Activated CD8-positive, alpha-beta T cell treated with anti-CD3 and anti-CD28 coated beads for 36 hours (primary cell): ENCODE measurements at regions of chr11 and their contacts with region 1.

Region 1: GRCh38 chr11:42840176-42840829 is 471.5 kb upstream of the API5 start:
- DNase-seq: no peak
- ATAC-seq: no peak
- H3K4me3 Mint-ChIP-seq: no peak overlapping the region
- H3K27ac Mint-ChIP-seq: no peak overlapping the region
- H3K4me1 Mint-ChIP-seq: no peaks in the 10 kb centered on the region
- H3K27me3 Mint-ChIP-seq: no peaks in the 10 kb centered on the region
- CTCF ChIP-seq: no peak

Region 2: DNA sequence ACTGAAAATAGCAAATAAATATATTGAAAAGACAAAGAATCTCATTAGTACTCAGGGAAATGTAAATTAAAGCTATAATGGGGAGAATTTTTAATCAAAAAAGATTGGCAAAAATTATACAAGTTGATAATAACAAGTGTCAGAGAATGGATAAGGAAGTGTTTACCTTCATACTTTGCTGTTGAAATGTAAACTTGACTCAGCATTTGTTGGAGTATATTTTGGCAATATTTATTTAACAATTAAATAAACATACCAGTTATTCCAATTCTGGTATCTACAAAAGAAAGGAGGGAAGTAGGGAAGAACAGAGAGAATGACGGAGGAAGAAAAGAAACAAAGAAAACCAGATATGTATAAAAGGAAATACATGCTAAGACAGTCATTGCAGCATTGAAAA is 45.3 kb before region 1 on chr11:
- CTCF ChIA-PET with region 1: no interaction called
- POLR2A ChIA-PET with region 1: no interaction called
- intact Hi-C with region 1: no loop called
- DNase-seq: no peak
- ATAC-seq: no peak
- H3K4me3 Mint-ChIP-seq: no peak overlapping the region
- H3K27ac Mint-ChIP-seq: no peak overlapping the region
- H3K4me1 Mint-ChIP-seq: no peaks in the 10 kb centered on the region
- H3K27me3 Mint-ChIP-seq: no peaks in the 10 kb centered on the region
- CTCF ChIP-seq: no peak

Region 3: GRCh38 chr11:42816471-42816870 is 23.8 kb before region 1 on chr11:
- CTCF ChIA-PET with region 1: no interaction called
- POLR2A ChIA-PET with region 1: no interaction called
- intact Hi-C with region 1: no loop called
- DNase-seq: no peak
- ATAC-seq: no peak
- H3K4me3 Mint-ChIP-seq: no peak overlapping the region
- H3K27ac Mint-ChIP-seq: no peak overlapping the region
- H3K4me1 Mint-ChIP-seq: no peaks in the 10 kb centered on the region
- H3K27me3 Mint-ChIP-seq: no peaks in the 10 kb centered on the region
- CTCF ChIP-seq: no peak

Region 4: DNA sequence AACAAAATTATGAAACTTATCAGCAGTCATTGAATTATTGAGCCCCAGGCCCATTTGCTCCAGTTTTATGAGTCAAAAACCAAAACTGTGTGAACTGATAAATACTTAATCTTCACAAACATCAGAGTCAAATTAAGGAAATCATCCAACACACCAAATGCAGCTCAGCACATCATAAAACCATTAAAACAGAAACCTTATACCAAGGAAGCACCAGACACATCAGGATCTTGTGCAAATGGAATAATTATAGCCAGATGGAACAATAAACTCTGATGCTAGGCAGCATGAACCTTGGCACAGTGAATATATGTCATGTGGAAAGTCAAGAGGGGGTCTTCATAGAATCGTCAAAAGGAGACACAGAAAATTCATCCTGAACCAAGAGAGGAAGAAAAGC is 60.8 kb after region 1 on chr11:
- CTCF ChIA-PET with region 1: no interaction called
- POLR2A ChIA-PET with region 1: no interaction called
- intact Hi-C with region 1: loop called (anchors 10 kb)
- DNase-seq: no peak
- ATAC-seq: no peak
- H3K4me3 Mint-ChIP-seq: no peak overlapping the region
- H3K27ac Mint-ChIP-seq: no peak overlapping the region
- H3K4me1 Mint-ChIP-seq: no peaks in the 10 kb centered on the region
- H3K27me3 Mint-ChIP-seq: no peaks in the 10 kb centered on the region
- CTCF ChIP-seq: no peak